Breast epithelium (tissue), 4 donors: ENCODE measurements at regions of chr17 and their contacts with region 1.

Region 1: GRCh38 chr17:45962221-45962972 is 36.7 kb upstream of the STH start:
- DNase-seq: no peak
- H3K4me3 ChIP-seq: no peak overlapping the region
- H3K27ac ChIP-seq: no peak overlapping the region
- H3K4me1 ChIP-seq: no peaks in the 10 kb centered on the region
- H3K27me3 ChIP-seq: no peaks in the 10 kb centered on the region
- CTCF ChIP-seq: no peak
- POLR2A ChIP-seq: no peak

Region 2: GRCh38 chr17:45973099-45973780 is 10.8 kb after region 1 on chr17:
- intact Hi-C with region 1: loop called (anchors 1 kb)
- DNase-seq: peak; percentile 53 to 82
- H3K4me3 ChIP-seq: peak overlapping the region in 1 of 3 donors; percentile 25
- H3K27ac ChIP-seq: peak overlapping the region; percentile 33 to 80
- H3K4me1 ChIP-seq: no peaks in the 10 kb centered on the region
- H3K27me3 ChIP-seq: no peaks in the 10 kb centered on the region
- CTCF ChIP-seq: no peak
- POLR2A ChIP-seq: no peak